ENCODE measurements at regions of chr11 and their contacts with region 1.

Region 1: GRCh38 chr11:88552377-88553062 is 215.0 kb upstream of the CTSC start:
- DNase-seq: peak; percentile 32
- CTCF ChIP-seq: peak; percentile 76

Region 2: DNA sequence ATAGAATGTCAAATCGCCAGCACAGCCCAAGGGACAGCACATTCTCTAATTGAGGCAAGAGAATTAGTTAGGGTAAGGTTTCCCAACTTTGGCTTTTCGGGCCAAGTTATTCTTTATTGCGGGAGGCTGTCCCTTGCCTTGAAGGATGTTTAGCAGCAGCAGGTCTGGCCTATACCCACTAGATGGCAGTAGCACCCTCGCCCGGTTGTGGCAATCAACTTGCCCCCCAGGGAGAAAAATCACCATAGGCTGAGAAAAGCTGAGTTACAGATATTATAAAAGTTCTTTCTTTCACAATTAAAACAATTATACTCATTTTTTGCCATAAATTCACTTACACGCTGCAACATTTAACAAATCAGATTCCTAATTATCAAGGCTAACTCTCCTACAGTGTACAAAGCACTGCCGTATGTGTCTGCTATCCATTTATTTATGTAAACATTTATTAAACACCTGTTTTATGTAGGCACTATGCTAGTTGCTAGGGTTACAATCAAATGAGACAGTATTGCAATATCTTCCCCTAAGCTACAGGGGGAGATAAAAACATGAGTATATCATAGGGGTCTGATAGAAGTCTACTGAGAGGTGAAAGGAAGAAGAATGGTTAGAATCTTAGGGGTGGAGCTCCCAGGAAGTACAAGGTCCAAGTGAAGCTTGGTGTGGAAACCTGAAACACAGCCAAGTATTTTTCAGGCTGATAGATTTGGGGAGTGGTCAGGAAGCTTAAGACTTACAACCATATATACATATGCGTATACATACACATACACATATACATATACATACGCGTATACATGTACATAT is 829.6 kb before region 1 on chr11:
- in situ Hi-C with region 1: loop called (anchors 25 kb)
- DNase-seq: peak; percentile 15
- CTCF ChIP-seq: peak; percentile 68

Region 3: GRCh38 chr11:88402192-88402715 is 150.3 kb before region 1 on chr11:
- in situ Hi-C with region 1: no loop called
- DNase-seq: no peak
- CTCF ChIP-seq: no peak

Region 4: DNA sequence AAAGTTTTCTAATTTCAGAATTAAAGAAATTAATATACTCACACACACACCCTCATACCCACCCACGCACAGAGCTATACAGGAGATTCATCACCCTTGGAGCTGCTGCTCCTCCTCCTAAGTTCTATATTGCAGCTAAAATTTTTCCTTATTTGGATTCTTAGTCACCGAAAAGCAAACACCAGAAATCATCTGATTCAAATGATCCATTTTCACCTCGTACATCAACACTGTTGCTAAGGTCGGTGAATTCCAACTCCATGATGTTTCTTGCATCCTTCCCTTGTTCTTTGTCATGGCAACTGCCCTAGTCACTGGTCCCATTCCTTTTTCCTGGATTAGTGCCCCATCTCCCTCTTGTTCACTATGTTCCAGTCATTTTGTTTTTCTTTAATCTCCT is 227.1 kb after region 1 on chr11:
- in situ Hi-C with region 1: no loop called
- DNase-seq: no peak
- CTCF ChIP-seq: no peak

Region 5: GRCh38 chr11:88827018-88827676 is 274.6 kb after region 1 on chr11:
- in situ Hi-C with region 1: no loop called
- DNase-seq: no peak
- CTCF ChIP-seq: no peak

Region 6: GRCh38 chr11:88886796-88887195 is 334.3 kb after region 1 on chr11:
- in situ Hi-C with region 1: loop called (anchors 25 kb)
- DNase-seq: peak; percentile 8
- CTCF ChIP-seq: peak; percentile 64